ENCODE measurements at regions of chr3 and their contacts with region 1.

Region 1: GRCh38 chr3:45491344-45491743 is 103.0 kb downstream of the LARS2 start:
- DNase-seq: no peak
- ATAC-seq: no peak
- H3K4me3 ChIP-seq: no peak overlapping the region
- H3K4me3 Mint-ChIP-seq: no peak overlapping the region
- H3K27ac ChIP-seq: no peak overlapping the region
- H3K27ac Mint-ChIP-seq: no peak overlapping the region
- H3K4me1 ChIP-seq: no peaks in the 10 kb centered on the region
- H3K4me1 Mint-ChIP-seq: peaks cover 3% of the 10 kb centered on the region
- H3K27me3 ChIP-seq: no peaks in the 10 kb centered on the region
- H3K27me3 Mint-ChIP-seq: no peaks in the 10 kb centered on the region
- CTCF ChIP-seq: no peak

Region 2: GRCh38 chr3:45218578-45219390 is 272.6 kb before region 1 on chr3:
- CTCF ChIA-PET with region 1: no interaction called
- POLR2A ChIA-PET with region 1: no interaction called
- intact Hi-C with region 1: loop called in 1 of 2 experiments (anchors 5 kb)
- DNase-seq: no peak
- ATAC-seq: no peak
- H3K4me3 ChIP-seq: no peak overlapping the region
- H3K4me3 Mint-ChIP-seq: no peak overlapping the region
- H3K27ac ChIP-seq: no peak overlapping the region
- H3K27ac Mint-ChIP-seq: no peak overlapping the region
- H3K4me1 ChIP-seq: no peaks in the 10 kb centered on the region
- H3K4me1 Mint-ChIP-seq: no peaks in the 10 kb centered on the region
- H3K27me3 ChIP-seq: peaks cover 25 to 31% of the 10 kb centered on the region in 2 experiments
- H3K27me3 Mint-ChIP-seq: peaks cover 50% of the 10 kb centered on the region
- CTCF ChIP-seq: no peak